ENCODE measurements at regions of chr4 and their contacts with region 1.

Region 1: GRCh38 chr4:118954246-118954645 is 65.6 kb downstream of the SYNPO2 start:
- DNase-seq: no peak
- ATAC-seq: no peak
- H3K4me3 ChIP-seq: no peak overlapping the region
- H3K27ac ChIP-seq: peak overlapping the region; percentile 57
- H3K4me1 ChIP-seq: peaks cover 38% of the 10 kb centered on the region
- H3K27me3 ChIP-seq: no peaks in the 10 kb centered on the region
- CTCF ChIP-seq: no peak

Region 2: GRCh38 chr4:118898684-118899138 is 55.5 kb before region 1 on chr4:
- intact Hi-C with region 1: loop called in 1 of 2 experiments (anchors 5 kb)
- DNase-seq: peak; percentile 51 to 78
- ATAC-seq: peak; percentile 87 to 94 (median 92)
- H3K4me3 ChIP-seq: peak overlapping the region; percentile 37
- H3K27ac ChIP-seq: peak overlapping the region; percentile 88
- H3K4me1 ChIP-seq: peaks cover 30% of the 10 kb centered on the region
- H3K27me3 ChIP-seq: no peaks in the 10 kb centered on the region
- CTCF ChIP-seq: no peak

Region 3: DNA sequence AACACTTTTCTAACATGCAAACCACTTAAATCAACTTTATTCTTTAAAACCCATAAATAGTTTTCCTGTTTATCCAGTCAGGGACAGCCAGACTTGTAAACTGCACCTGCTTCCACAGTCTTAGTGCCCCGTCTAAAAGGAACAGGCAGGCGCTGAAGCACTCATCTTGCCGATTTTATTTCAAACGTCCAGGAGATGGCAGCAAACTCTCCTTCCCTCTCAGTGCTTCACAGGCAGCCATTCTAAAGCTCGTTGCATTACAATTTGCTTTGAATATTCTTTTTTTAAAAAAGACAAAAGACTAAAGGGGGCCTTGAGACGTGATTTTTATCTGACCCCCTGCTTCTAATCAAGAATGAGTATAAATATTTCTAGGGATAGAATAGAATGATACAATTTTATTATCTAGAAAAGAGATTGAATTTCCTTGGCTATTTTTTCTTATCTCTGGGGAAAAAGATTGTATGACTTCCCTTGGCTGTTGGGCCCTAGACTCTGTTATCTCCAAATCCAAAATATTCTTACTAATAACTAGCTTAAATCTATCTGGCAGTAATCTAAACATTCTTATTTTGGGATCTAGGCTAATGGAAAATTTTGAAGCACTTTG is 87.8 kb after region 1 on chr4:
- intact Hi-C with region 1: no loop called
- DNase-seq: no peak
- ATAC-seq: peak; percentile 61 to 68 (median 64)
- H3K4me3 ChIP-seq: peak overlapping the region; percentile 40
- H3K27ac ChIP-seq: peak overlapping the region; percentile 98
- H3K4me1 ChIP-seq: peaks cover 66% of the 10 kb centered on the region
- H3K27me3 ChIP-seq: no peaks in the 10 kb centered on the region
- CTCF ChIP-seq: peak; percentile 72

Measured in psoas muscle (tissue), 8 donors.